Activated naive CD4-positive, alpha-beta T cell treated with anti-CD3 and anti-CD28 coated beads, Interleukin-2, amount 10 ng/mL, durations not matched to agents 7 days and 5 days (primary cell): ENCODE measurements at regions of chr6 and their contacts with region 1.

Region 1: GRCh38 chr6:137707590-137708360 is 159.3 kb upstream of the TNFAIP3 start:
- DNase-seq: peak; percentile 89
- H3K4me3 Mint-ChIP-seq: peak overlapping the region; percentile 40
- H3K27ac Mint-ChIP-seq: peak overlapping the region; percentile 91
- H3K4me1 Mint-ChIP-seq: peaks cover 58% of the 10 kb centered on the region
- H3K27me3 Mint-ChIP-seq: peaks cover 4% of the 10 kb centered on the region

Region 2: DNA sequence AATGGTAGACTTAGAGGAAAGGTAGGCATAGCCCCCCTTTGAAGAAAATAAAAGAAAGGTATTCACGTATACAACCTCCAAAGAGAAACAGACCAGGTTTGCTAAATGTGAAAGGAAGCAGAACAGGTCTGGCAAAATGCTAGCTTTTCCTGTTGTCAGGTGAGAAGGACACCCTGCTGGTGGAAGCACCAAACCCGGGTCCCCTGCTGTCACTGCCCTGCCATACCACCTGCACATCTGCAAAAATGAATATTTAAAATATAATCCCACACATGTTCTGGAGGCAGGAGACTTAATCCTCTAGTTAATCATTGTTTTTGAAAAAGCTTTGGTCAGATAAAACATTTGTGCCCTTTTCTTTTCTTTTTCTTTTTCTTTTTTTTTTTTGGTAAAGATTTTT is 164.7 kb before region 1 on chr6:
- CTCF ChIA-PET with region 1: no interaction called
- DNase-seq: peak; percentile 33
- H3K4me3 Mint-ChIP-seq: peak overlapping the region; percentile 8
- H3K27ac Mint-ChIP-seq: peak overlapping the region; percentile 64
- H3K4me1 Mint-ChIP-seq: peaks cover 37% of the 10 kb centered on the region
- H3K27me3 Mint-ChIP-seq: peaks cover under 1% of the 10 kb centered on the region

Region 3: DNA sequence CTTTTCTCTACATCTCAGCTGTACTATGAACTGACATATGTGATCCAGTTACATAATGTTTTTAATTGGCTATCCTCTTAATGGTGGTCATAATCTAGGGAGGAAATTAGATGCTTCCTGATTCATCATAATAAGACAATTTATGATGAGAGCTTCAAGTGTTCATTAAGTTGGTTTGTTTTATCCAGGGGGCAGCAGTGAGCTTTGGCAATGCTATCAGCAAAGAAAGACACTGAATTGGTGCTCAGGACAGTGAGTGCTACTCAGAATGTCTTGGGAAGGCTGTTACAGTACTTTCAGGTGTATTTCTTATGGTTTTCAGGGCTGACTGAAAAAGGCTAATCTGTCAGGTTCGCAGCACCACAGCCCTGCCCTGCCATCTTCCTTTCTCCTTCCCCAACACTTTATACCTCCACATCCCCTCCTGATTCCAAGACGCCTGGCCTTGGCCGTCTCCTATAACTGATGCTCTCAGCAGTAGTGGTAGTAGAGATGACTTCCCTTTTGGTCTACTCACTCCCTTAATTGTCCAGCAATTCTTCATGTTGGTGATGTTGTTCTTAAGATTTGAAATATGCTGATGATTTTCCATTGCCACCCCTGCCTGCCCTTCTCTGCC is 92.3 kb after region 1 on chr6:
- CTCF ChIA-PET with region 1: interaction called, 67 read pairs
- DNase-seq: peak; percentile 64
- H3K4me3 Mint-ChIP-seq: no peak overlapping the region
- H3K27ac Mint-ChIP-seq: no peak overlapping the region
- H3K4me1 Mint-ChIP-seq: peaks cover 55% of the 10 kb centered on the region
- H3K27me3 Mint-ChIP-seq: no peaks in the 10 kb centered on the region

Region 4: DNA sequence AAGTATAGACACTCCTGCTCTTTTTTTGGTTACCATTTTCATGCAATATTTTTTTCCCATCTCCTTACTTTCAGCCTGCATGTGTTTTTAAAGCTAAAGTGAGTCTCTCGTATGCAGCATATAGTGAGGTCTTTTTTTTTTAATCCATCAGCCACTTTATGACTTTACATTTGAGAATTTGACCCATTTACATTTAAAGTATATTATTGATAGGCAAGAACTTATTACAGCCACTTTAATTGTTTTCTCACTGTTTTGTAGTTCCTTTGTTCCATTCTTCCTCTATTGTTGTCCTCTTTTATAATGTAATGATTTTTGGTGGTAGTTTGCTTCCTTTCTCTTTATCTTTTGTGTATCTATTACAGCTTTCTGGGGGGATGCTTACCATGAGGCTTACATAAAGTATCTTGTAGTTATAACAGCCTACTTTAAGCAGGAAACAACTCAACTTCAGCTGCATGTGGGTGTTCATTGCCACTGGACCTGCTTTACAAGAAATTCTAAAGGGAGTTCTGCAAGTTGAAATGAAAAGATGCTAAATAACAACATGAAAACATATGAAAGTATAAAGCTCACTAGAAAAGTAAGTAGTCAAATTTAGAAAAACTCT is 231.1 kb after region 1 on chr6:
- CTCF ChIA-PET with region 1: interaction called, 50 read pairs
- DNase-seq: no peak
- H3K4me3 Mint-ChIP-seq: no peak overlapping the region
- H3K27ac Mint-ChIP-seq: no peak overlapping the region
- H3K4me1 Mint-ChIP-seq: peaks cover 14% of the 10 kb centered on the region
- H3K27me3 Mint-ChIP-seq: no peaks in the 10 kb centered on the region

Region 5: GRCh38 chr6:137975188-137975940 is 267.6 kb after region 1 on chr6:
- CTCF ChIA-PET with region 1: interaction called, 35 read pairs
- DNase-seq: peak; percentile 29
- H3K4me3 Mint-ChIP-seq: peak overlapping the region; percentile 67
- H3K27ac Mint-ChIP-seq: peak overlapping the region; percentile 95
- H3K4me1 Mint-ChIP-seq: peaks cover 40% of the 10 kb centered on the region
- H3K27me3 Mint-ChIP-seq: no peaks in the 10 kb centered on the region